ENCODE measurements at regions of chr2 and their contacts with region 1.

Region 1: GRCh38 chr2:96951093-96951654 is 35.2 kb downstream of the FAM178B start:
- ATAC-seq: peak; percentile 79 to 97 (median 94)
- H3K4me3 ChIP-seq: no peak overlapping the region
- H3K27ac ChIP-seq: no peak overlapping the region
- H3K4me1 ChIP-seq: peaks cover 30 to 48% of the 10 kb centered on the region in 2 donors

Region 2: DNA sequence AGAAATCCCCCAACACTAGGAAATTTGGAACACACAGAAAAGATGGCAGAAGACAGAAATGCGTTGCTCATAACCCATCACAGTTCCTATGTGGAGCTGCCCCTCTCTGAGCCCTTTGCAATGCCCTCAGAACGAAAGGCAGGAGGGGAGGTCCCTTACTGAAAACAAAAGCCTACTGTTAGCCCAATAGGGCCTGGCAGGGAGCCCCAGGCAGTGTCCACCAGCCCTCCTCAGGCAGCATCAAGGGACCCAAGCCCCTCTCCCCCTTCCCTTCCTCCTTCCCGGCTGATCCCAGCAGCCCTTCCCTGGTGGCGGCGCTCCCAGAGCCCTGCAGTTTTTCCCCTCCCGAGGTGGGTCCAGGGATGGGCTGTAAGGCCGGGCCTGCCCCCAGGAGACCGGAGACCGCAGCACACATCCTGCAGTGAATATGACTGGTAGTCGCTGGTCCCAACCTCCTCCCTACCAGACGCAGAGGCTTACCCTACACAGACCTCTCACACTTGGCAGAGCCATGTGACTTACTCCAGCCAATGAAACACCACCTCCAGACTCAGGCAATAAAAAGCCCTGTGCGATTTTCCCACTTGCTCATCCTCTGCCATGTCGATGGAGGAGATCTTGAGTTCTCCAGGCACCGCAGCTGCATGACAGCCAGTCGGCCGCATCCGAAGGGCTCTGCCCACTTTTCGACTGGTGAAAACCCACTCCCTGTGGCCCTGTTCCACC is 786.6 kb before region 1 on chr2:
- in situ Hi-C with region 1: no loop called
- ATAC-seq: peak in 5 of 8 experiments; percentile 54 to 88 (median 85)
- H3K4me3 ChIP-seq: no peak overlapping the region
- H3K27ac ChIP-seq: no peak overlapping the region
- H3K4me1 ChIP-seq: peaks cover 0 to 7% of the 10 kb centered on the region in 2 donors

Region 3: GRCh38 chr2:96856776-96857673 is 94.1 kb before region 1 on chr2:
- in situ Hi-C with region 1: loop called in 7 of 9 experiments (anchors 10 to 25 kb)
- ATAC-seq: no peak
- H3K4me3 ChIP-seq: peak overlapping the region; percentile 56 to 92 (median 59)
- H3K27ac ChIP-seq: peak overlapping the region; percentile 68 to 83
- H3K4me1 ChIP-seq: peaks cover 8 to 15% of the 10 kb centered on the region in 2 donors

Region 4: GRCh38 chr2:96868555-96869280 is 82.5 kb before region 1 on chr2:
- in situ Hi-C with region 1: loop called in 5 of 9 experiments (anchors 10 to 25 kb)
- ATAC-seq: peak; percentile 39 to 67 (median 56)
- H3K4me3 ChIP-seq: peak overlapping the region; percentile 88 to 98 (median 93)
- H3K27ac ChIP-seq: peak overlapping the region; percentile 96 to 97
- H3K4me1 ChIP-seq: peaks cover 11 to 14% of the 10 kb centered on the region in 2 donors